Heart left ventricle (tissue), 16 donors: ENCODE measurements at regions of chr12 and their contacts with region 1.

Region 1: GRCh38 chr12:27821259-27821973 is 41.4 kb upstream of the MANSC4 start:
- DNase-seq: peak in 2 of 5 donors; percentile 16 to 24
- ATAC-seq: peak in 3 of 4 donors; percentile 68 to 74 (median 69)
- H3K4me3 ChIP-seq: no peak overlapping the region
- H3K27ac ChIP-seq: no peak overlapping the region
- H3K4me1 ChIP-seq: peaks cover 0 to 16% (median 0%) of the 10 kb centered on the region in 12 donors
- H3K27me3 ChIP-seq: peaks cover 0 to 4% (median 0%) of the 10 kb centered on the region in 9 donors
- CTCF ChIP-seq: peak; percentile 63 to 84 (median 74)
- POLR2A ChIP-seq: no peak

Region 2: DNA sequence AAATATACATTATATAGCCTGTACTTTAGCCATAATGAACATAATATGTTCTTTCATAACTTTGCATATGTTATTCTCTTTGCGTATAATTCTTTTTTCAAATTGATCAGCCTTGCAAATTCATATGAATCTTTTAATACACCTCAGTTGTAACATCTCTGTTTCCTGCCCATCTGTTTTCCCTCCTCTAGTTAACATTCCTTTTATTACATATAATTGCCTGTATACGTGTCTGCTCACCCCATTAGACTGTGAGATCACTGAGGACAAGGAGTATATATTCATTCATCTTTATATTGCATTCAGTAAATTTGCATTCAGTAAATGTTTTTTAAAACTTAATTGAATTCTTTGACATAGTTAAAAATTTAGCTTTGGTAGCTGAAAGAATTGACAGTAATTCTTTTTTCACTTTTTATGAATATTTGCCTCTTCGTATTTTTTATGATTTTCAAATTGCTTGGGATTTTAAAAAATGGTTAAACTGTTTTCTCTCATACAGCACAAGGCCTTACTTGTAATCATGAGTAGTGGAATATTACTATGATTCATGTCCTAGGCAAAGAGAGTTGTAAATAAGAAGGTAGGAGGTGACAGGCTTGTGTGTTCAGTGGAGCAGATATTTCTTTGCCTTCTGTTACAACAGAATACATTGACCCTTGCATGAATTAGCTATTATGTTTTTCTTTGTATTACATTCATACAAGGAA is 74.2 kb before region 1 on chr12:
- intact Hi-C with region 1: loop called in 1 of 10 experiments (anchors 10 kb)
- DNase-seq: no peak
- ATAC-seq: peak in 1 of 4 donors; percentile 77
- H3K4me3 ChIP-seq: no peak overlapping the region
- H3K27ac ChIP-seq: peak overlapping the region in 3 of 12 donors; percentile 9 to 66 (median 9)
- H3K4me1 ChIP-seq: peaks cover 0 to 10% (median 0%) of the 10 kb centered on the region in 12 donors
- H3K27me3 ChIP-seq: no peaks in the 10 kb centered on the region
- CTCF ChIP-seq: no peak
- POLR2A ChIP-seq: no peak

Region 3: DNA sequence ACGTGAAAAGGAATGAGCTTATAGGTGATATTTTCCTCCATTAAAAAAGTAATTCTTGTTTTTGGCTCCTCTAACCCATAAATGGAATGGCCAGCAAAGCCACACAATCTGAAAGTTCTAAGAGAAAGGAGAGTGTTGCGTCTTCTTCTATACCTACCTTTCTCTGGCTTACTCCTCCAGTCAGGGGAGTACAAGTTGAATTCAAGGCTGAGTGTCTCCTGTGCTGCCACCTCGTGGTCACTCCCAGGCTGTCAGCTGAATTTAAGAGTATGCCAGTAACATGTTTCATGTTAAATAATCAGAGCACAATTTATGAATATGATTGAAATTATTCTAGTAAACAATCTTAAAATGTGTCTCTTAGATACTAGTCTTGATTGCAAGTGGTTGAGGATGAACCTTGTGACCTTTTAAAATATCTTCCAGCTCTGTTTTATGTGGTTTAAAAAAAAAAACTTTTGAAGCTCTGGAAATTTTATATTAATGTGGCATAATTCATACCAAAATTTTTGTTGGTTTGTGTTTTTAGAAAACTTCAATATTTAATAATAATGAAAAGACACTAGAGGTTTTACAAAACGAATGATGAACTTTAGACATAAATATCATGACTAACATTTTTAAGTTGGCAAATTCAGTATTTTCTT is 119.5 kb after region 1 on chr12:
- intact Hi-C with region 1: loop called in 2 of 10 experiments (anchors 10 kb)
- DNase-seq: peak; percentile 53 to 66 (median 62)
- ATAC-seq: peak in 3 of 4 donors; percentile 50 to 84 (median 73)
- H3K4me3 ChIP-seq: no peak overlapping the region
- H3K27ac ChIP-seq: no peak overlapping the region
- H3K4me1 ChIP-seq: no peaks in the 10 kb centered on the region
- H3K27me3 ChIP-seq: no peaks in the 10 kb centered on the region
- CTCF ChIP-seq: peak; percentile 65 to 86 (median 78)
- POLR2A ChIP-seq: no peak